BJ (cell line): ENCODE measurements at regions of chr3 and their contacts with region 1.

Region 1: DNA sequence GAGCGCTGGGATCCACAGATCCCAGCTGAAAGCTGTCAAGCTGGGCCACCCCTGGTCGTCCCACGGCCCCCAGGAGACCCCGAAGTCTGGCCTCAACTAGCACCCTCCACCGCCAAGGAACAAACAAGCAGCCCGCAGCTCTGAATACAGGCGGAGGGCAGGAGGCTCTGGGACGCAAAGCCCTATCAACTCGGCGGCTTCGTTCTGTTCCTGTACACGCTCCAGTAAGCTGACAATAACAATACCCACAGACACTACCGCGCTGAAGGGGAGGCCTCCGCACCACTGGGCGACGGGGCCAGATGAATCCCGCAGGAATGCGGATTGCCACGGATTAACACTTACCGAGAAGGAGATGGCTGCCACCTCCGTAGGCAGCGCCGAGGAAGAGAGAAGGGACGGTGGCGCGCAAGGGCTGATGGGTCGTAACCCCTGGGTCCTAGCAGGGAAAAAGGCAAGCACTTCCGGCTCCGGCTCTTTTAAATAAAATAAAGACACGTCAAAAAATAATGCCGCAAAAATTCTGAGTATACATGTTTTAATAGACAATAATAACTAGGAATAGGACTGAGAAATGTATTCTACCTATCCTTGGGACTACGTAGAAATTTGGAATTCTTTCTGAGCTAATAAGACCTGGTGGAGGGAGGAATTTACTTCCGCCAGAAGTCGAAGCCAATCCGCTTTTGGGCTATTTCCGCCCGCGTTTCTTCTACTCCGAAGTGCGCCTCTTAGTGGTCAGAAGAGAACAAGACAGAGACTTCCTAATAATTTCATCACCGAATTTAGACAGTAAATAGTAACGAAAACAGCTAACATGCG is at the start of gene RPL32:
- DNase-seq: peak; percentile 81
- H3K4me3 ChIP-seq: peak within 1 kb of the TSS; percentile 69
- H3K27me3 ChIP-seq: no peaks in the 10 kb centered on the region
- CTCF ChIP-seq: peak; percentile 83
- polyA plus RNA-seq, gene RPL32: 3,018 and 4,118 TPM in 2 replicates

Region 2: GRCh38 chr3:12782172-12782815 is 59.1 kb before region 1 on chr3:
- CTCF ChIA-PET with region 1: interaction called, 20 read pairs
- POLR2A ChIA-PET with region 1: no interaction called
- DNase-seq: no peak
- H3K4me3 ChIP-seq: no peak overlapping the region
- H3K27me3 ChIP-seq: peaks cover 5% of the 10 kb centered on the region
- CTCF ChIP-seq: no peak

Region 3: GRCh38 chr3:12810013-12810780 is 31.2 kb before region 1 on chr3:
- CTCF ChIA-PET with region 1: interaction called, 12 read pairs
- POLR2A ChIA-PET with region 1: interaction called, 7 read pairs
- DNase-seq: peak; percentile 30
- H3K4me3 ChIP-seq: peak overlapping the region; percentile 58
- H3K27me3 ChIP-seq: no peaks in the 10 kb centered on the region
- CTCF ChIP-seq: peak; percentile 65

Region 4: GRCh38 chr3:12815719-12816118 is 25.6 kb before region 1 on chr3:
- CTCF ChIA-PET with region 1: interaction called, 12 read pairs
- POLR2A ChIA-PET with region 1: interaction called, 7 read pairs
- DNase-seq: no peak
- H3K4me3 ChIP-seq: no peak overlapping the region
- H3K27me3 ChIP-seq: no peaks in the 10 kb centered on the region
- CTCF ChIP-seq: no peak

Region 5: GRCh38 chr3:12830785-12831156 is 10.6 kb before region 1 on chr3:
- CTCF ChIA-PET with region 1: interaction called, 36 read pairs
- POLR2A ChIA-PET with region 1: no interaction called
- DNase-seq: no peak
- H3K4me3 ChIP-seq: no peak overlapping the region
- H3K27me3 ChIP-seq: no peaks in the 10 kb centered on the region
- CTCF ChIP-seq: no peak; the same call in none of the 2 replicates

Region 6: DNA sequence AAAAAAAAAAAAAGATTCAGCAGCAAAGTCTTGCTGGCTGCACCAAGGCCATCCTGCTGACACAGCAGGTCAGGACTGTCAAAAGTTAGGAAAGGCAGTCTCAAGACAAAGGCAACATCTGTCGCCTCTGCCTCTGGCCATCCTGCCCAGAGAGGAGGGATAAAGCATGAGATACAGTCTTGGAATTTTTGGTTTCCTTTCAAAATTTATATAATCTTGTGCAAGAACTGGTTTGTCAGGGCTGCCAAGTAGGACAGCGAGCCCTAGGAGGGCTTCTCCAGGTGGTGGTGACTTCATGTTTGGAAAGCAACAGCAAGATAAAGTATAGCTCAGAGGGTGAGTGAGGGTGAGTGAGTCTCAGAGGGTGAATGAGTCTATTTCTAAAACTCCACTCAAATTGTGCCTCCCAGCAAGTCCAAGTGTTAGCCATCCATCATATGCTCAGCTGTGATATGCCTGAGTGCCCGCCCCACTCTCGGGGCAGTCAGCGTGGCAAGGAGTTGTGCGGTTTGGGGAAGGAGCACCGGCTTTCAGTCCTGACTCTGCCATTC is 11.9 kb after region 1 on chr3:
- CTCF ChIA-PET with region 1: interaction called, 14 read pairs
- POLR2A ChIA-PET with region 1: no interaction called
- DNase-seq: peak; percentile 22
- H3K4me3 ChIP-seq: no peak overlapping the region
- H3K27me3 ChIP-seq: peaks cover 15% of the 10 kb centered on the region
- CTCF ChIP-seq: no peak

Region 7: GRCh38 chr3:12919205-12919604 is 77.8 kb after region 1 on chr3:
- CTCF ChIA-PET with region 1: no interaction called
- POLR2A ChIA-PET with region 1: interaction called, 21 read pairs
- DNase-seq: no peak
- H3K4me3 ChIP-seq: no peak overlapping the region
- H3K27me3 ChIP-seq: no peaks in the 10 kb centered on the region
- CTCF ChIP-seq: no peak